Spleen (tissue), 13 donors: ENCODE measurements at regions of chr16 and their contacts with region 1.

Region 1: GRCh38 chr16:53549970-53550690 is 47.1 kb upstream of the AKTIP start:
- DNase-seq: no peak
- H3K4me3 ChIP-seq: peak overlapping the region in 1 of 8 donors; percentile 18
- H3K27ac ChIP-seq: no peak overlapping the region
- H3K4me1 ChIP-seq: peaks cover 3 to 20% (median 11%) of the 10 kb centered on the region in 6 donors
- H3K27me3 ChIP-seq: peaks cover 0 to 54% (median 4%) of the 10 kb centered on the region in 7 donors
- CTCF ChIP-seq: peak; percentile 32 to 80 (median 66)
- POLR2A ChIP-seq: no peak

Region 2: DNA sequence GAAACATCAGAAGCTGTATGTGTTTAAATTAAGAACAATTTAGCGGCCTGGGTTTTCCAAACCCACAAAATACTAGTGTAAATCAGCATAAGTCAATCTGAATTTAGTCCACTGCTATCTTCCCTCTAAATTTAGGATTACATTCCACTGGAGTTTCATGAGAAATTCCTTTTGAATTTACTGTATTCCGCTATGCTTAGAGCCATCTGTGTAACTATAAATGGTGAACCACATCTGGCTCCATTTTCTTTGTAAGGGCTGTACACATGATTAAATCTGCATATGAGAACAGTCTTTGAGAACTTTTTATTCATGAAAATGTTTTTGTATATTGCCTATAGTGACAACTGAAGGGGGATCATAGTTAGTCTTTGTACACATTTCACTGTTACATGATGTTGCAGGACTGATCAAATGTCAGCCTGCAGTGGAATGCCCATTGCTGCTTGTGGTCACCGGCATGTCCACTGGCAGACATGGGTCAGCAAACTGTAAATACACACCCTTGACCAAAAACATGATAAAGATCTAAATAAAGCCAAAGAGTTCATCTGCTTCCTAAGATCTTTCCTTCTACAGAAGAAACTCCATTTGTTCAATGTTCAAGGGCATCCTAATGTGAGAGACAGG is 116.8 kb after region 1 on chr16:
- intact Hi-C with region 1: no loop called
- DNase-seq: no peak
- H3K4me3 ChIP-seq: no peak overlapping the region
- H3K27ac ChIP-seq: no peak overlapping the region
- H3K4me1 ChIP-seq: no peaks in the 10 kb centered on the region
- H3K27me3 ChIP-seq: no peaks in the 10 kb centered on the region
- CTCF ChIP-seq: no peak
- POLR2A ChIP-seq: no peak

Region 3: GRCh38 chr16:53922807-53923571 is 372.9 kb after region 1 on chr16:
- intact Hi-C with region 1: no loop called
- DNase-seq: no peak
- H3K4me3 ChIP-seq: no peak overlapping the region
- H3K27ac ChIP-seq: no peak overlapping the region
- H3K4me1 ChIP-seq: peaks cover 0 to 8% (median 0%) of the 10 kb centered on the region in 6 donors
- H3K27me3 ChIP-seq: no peaks in the 10 kb centered on the region
- CTCF ChIP-seq: no peak
- POLR2A ChIP-seq: no peak

Region 4: GRCh38 chr16:55257966-55258613 is 1708.0 kb after region 1 on chr16:
- intact Hi-C with region 1: loop called (anchors 10 kb)
- DNase-seq: peak; percentile 76
- H3K4me3 ChIP-seq: no peak overlapping the region
- H3K27ac ChIP-seq: no peak overlapping the region
- H3K4me1 ChIP-seq: no peaks in the 10 kb centered on the region
- H3K27me3 ChIP-seq: peaks cover 0 to 19% (median 0%) of the 10 kb centered on the region in 7 donors
- CTCF ChIP-seq: peak in 9 of 11 experiments; percentile 26 to 74 (median 54)
- POLR2A ChIP-seq: no peak